Ovary (tissue), 10 donors: ENCODE measurements at regions of chr1 and their contacts with region 1.

Region 1: GRCh38 chr1:16440470-16441281 is at the start of gene NECAP2:
- DNase-seq: peak; percentile 92 to 97 (median 94)
- H3K4me3 ChIP-seq: peak within 1 kb of the TSS; percentile 67
- H3K27ac ChIP-seq: peak within 1 kb of the TSS; percentile 15 to 65
- H3K4me1 ChIP-seq: peaks cover 2% of the 10 kb centered on the region
- H3K27me3 ChIP-seq: no peaks in the 10 kb centered on the region
- CTCF ChIP-seq: peak; percentile 91 to 97 (median 95)
- EP300 ChIP-seq: no peak
- POLR2A ChIP-seq: peak; percentile 20
- total RNA-seq, gene NECAP2: 36.2 to 60.4 (median 51.9) TPM

Region 2: DNA sequence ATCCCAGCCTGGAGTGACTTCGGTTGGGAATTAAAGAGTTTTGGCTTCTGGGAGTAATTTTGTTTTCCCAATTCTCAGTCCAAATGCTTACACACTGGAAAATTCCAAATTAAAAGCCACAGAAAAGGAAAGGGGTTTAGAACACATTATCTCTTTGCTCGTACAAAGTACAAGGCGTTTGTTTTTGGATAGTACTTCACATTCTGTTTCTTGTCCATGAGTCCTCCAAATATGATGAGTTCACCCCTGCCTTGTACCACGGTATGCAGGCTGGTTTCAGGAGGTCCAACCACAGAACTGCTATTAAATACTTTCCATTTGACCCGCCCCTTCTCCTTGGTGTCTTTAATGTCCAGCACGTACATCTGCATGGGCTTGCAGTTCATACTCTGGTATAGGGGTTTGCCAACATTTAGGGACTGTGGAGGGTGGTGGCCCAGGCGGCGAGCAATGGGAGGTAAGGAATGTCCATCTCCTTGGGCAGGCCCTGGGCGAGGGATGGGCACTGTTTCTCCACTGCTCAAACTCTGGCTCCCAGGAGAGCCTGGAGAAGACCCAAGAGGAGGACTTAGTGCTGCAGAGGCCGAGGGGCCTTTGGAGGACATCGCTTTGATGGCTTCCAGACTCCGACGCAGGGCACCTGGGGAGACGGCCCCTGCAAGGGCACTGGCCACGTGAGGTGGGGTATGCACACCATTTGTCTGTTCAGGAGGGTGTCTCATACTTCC is 190.0 kb before region 1 on chr1:
- intact Hi-C with region 1: no loop called
- DNase-seq: peak in 3 of 5 donors; percentile 25 to 58 (median 49)
- H3K4me3 ChIP-seq: no peak overlapping the region
- H3K27ac ChIP-seq: peak overlapping the region; percentile 64 to 82
- H3K4me1 ChIP-seq: peaks cover 26% of the 10 kb centered on the region
- H3K27me3 ChIP-seq: no peaks in the 10 kb centered on the region
- CTCF ChIP-seq: no peak
- EP300 ChIP-seq: no peak
- POLR2A ChIP-seq: no peak

Region 3: DNA sequence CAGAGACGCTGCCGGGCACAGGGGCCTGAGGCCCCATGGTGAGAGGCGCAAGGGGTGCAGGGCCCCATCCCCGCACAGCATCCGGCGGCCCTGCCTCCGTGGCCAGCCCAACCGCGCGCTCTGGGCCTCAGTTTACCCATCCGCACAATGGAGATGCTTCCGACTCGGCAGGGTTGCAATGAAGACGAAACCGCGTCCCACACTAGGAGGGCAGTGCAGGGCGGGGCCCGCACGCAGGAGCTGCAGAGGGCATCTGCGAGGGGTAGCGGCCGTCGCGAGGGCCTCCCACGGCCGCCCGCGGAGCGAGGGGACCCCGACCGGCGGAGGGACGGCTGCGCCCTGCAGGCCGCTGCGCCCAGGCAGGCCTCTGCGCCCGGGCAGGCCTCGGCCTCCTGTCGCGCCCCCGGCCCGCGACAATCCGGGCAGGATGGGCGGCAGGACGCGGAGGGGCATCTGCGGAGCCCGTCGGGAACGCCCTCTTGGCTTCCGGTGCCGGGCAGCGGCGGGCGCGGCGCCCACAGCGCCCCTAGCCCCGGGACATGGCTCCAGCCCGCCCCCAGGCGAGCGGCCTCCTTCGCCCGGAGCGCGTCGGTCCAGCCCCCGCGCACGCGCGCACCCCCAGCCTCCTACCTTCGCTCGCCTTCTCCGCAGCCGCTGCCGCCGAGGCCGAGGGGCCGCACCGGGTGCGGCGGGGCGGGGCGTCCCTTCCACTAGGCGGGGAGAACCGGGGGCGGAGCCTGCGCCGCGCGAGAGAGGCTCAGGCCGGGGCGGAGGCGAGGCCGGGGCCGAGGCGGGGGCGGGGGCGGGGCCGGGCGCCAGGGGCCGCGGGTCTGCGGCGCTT is 58.1 kb after region 1 on chr1:
- intact Hi-C with region 1: loop called in 1 of 4 experiments (anchors 10 kb)
- DNase-seq: peak; percentile 91 to 96 (median 93)
- H3K4me3 ChIP-seq: peak overlapping the region; percentile 82
- H3K27ac ChIP-seq: peak overlapping the region; percentile 72 to 89
- H3K4me1 ChIP-seq: peaks cover 3% of the 10 kb centered on the region
- H3K27me3 ChIP-seq: no peaks in the 10 kb centered on the region
- CTCF ChIP-seq: peak in 2 of 3 donors; percentile 25 to 46
- EP300 ChIP-seq: no peak
- POLR2A ChIP-seq: peak; percentile 54